ENCODE measurements at regions of chr5 and their contacts with region 1.

Region 1: DNA sequence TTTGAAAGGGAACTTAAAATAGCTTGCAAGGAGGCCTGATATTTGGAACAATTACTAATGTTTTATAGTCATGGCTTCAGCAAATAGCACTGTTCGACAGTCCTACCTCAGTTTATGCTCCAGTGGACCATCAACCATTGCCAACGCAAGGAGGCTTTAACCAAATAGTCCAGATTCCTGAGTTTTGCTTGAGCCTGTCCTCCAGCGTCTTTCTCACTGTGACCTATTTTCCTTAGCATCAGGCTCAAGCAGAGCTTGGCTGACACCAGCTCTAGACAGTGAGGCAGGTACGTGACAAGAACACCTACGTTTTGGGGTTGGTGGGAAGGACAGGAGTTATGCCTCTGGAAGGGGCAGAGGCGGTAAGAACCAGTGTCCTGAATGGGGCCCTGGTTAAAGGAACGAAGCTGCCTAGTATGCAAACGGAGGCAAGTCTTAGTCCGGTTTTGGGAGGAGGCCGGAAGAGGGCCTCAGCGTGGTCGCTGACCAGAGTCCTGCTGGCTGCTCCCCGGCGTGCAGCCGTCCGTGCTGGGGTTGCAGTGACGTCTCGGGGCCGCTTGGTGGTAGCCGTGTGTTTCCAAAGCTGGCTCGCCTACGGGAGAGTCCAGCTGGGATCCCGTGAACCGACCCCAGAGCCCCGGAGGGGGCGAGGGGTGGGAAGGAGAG is 998 bp upstream of the FGF18 start:
- DNase-seq: peak; percentile 70 to 87
- H3K4me3 ChIP-seq: peak overlapping the region; percentile 64; the same call in 1 of the 2 replicates
- H3K27ac ChIP-seq: no peak overlapping the region
- H3K4me1 ChIP-seq: 0 out of 2 replicates have a peak, but pooled peaks cover 7% of the 10 kb centered on the region
- H3K27me3 ChIP-seq: no peaks in the 10 kb centered on the region
- CTCF ChIP-seq: peak; percentile 93

Region 2: GRCh38 chr5:171405601-171406005 is 12.8 kb before region 1 on chr5:
- CTCF ChIA-PET with region 1: no interaction called
- POLR2A ChIA-PET with region 1: interaction called, 11 read pairs
- intact Hi-C with region 1: no loop called
- DNase-seq: no peak
- H3K4me3 ChIP-seq: no peak overlapping the region
- H3K27ac ChIP-seq: peak overlapping the region; percentile 16; the same call in 1 of the 2 replicates
- H3K4me1 ChIP-seq: peaks cover 22% of the 10 kb centered on the region; the same call in 1 of the 2 replicates
- H3K27me3 ChIP-seq: no peaks in the 10 kb centered on the region
- CTCF ChIP-seq: peak; percentile 50; the same call in 1 of the 2 replicates

Region 3: GRCh38 chr5:171521219-171521633 is 102.8 kb after region 1 on chr5:
- CTCF ChIA-PET with region 1: interaction called, 6 read pairs
- POLR2A ChIA-PET with region 1: no interaction called
- intact Hi-C with region 1: loop called (anchors 1 kb)
- DNase-seq: peak; percentile 82 to 96
- H3K4me3 ChIP-seq: peak overlapping the region; percentile 47; the same call in 1 of the 2 replicates
- H3K27ac ChIP-seq: peak overlapping the region; percentile 98
- H3K4me1 ChIP-seq: peaks cover 48% of the 10 kb centered on the region
- H3K27me3 ChIP-seq: no peaks in the 10 kb centered on the region
- CTCF ChIP-seq: peak; percentile 46; the same call in 1 of the 2 replicates

Region 4: DNA sequence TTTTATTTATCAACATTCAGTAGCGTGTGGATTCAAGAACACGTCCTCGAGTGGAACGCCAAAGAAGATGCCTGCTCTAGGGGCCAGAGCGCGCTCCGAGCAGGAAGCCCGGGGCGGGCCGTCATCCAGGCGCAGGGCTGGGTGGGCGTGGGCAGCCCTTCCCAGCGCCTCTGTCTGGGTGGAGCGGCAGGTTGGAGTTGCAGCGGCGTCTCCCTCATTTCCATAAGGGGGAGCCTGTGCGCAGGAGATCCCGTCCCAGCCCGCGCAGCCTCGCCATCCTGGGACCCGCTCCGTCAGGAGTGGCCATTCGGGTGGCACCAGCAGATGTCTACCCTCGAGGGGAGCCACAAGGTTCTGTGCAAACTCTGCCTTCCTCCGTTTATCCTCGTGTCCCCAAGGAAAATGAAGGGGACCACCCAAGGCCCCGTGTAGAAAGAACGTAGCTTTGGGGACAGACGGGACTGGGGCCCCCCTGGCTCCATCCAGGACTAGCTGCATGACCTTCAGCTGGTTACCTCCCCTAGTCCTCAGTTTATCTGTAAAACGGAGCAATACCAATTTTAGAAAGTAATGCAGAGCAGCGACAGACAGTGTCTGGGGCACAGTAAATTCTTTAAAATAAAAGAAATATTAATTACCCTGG is 211.7 kb after region 1 on chr5:
- CTCF ChIA-PET with region 1: no interaction called
- POLR2A ChIA-PET with region 1: no interaction called
- intact Hi-C with region 1: loop called (anchors 5 kb)
- DNase-seq: peak in 1 of 2 experiments; percentile 60
- H3K4me3 ChIP-seq: peak overlapping the region; percentile 30; the same call in 1 of the 2 replicates
- H3K27ac ChIP-seq: no peak overlapping the region
- H3K4me1 ChIP-seq: peaks cover 26% of the 10 kb centered on the region
- H3K27me3 ChIP-seq: no peaks in the 10 kb centered on the region
- CTCF ChIP-seq: peak; percentile 55

Region 5: GRCh38 chr5:171907725-171908343 is 489.4 kb after region 1 on chr5:
- CTCF ChIA-PET with region 1: no interaction called
- POLR2A ChIA-PET with region 1: no interaction called
- intact Hi-C with region 1: loop called (anchors 1 kb)
- DNase-seq: peak; percentile 37 to 56
- H3K4me3 ChIP-seq: no peak overlapping the region
- H3K27ac ChIP-seq: no peak overlapping the region
- H3K4me1 ChIP-seq: no peaks in the 10 kb centered on the region
- H3K27me3 ChIP-seq: no peaks in the 10 kb centered on the region
- CTCF ChIP-seq: peak; percentile 87

Region 6: DNA sequence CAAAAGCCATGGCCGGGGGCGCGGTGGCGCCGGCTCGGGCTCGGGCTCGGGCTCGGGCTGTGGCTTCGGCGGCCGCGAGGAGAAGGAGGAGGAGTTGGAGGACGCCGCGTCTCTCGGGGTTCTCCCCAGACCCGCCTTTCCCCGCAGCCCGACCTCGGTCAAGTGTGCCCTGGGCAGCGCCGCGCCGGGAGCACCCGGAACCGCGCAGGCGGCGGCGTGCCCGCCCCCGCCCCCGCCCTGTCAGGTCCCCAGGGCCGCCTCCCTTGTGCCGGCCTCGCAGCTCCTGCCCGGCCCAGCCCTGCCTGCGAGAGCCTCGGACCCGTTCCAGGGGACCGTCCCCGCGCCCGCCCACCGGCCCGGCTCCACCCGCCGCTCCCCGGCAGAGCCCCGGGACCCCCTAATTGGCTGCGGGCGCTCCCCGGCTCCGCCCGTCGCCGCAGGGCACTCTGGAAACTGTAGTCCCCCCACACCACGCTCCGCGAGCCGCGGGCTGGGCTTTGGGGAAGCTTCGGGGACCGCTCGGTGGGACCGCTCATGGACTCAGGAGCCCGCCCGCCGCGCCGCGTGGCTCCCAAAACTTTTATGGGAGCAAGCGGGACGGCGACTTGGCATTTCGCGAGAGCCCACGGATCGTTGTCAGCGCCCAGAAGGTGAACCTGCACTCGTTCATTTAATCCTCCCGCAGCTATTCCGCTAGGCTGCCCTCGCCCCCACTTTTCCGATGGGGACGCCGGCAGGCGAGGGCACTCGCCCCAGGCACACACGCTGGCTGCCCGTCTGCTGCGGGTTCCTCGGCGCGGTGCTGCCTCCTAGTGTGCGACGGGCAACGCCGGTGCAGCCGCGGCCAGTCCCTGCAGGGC is 769.8 kb after region 1 on chr5 and contains the start of gene STK10:
- CTCF ChIA-PET with region 1: no interaction called
- POLR2A ChIA-PET with region 1: no interaction called
- intact Hi-C with region 1: loop called (anchors 2 kb)
- DNase-seq: peak; percentile 71 to 93
- H3K4me3 ChIP-seq: peak within 1 kb of the TSS; percentile 67
- H3K27ac ChIP-seq: peak within 1 kb of the TSS; percentile 65
- H3K4me1 ChIP-seq: peaks cover 21% of the 10 kb centered on the region
- H3K27me3 ChIP-seq: no peaks in the 10 kb centered on the region
- CTCF ChIP-seq: peak; percentile 81
- total RNA-seq, gene STK10: 23.3 and 31.5 TPM in 2 replicates

Region 7: DNA sequence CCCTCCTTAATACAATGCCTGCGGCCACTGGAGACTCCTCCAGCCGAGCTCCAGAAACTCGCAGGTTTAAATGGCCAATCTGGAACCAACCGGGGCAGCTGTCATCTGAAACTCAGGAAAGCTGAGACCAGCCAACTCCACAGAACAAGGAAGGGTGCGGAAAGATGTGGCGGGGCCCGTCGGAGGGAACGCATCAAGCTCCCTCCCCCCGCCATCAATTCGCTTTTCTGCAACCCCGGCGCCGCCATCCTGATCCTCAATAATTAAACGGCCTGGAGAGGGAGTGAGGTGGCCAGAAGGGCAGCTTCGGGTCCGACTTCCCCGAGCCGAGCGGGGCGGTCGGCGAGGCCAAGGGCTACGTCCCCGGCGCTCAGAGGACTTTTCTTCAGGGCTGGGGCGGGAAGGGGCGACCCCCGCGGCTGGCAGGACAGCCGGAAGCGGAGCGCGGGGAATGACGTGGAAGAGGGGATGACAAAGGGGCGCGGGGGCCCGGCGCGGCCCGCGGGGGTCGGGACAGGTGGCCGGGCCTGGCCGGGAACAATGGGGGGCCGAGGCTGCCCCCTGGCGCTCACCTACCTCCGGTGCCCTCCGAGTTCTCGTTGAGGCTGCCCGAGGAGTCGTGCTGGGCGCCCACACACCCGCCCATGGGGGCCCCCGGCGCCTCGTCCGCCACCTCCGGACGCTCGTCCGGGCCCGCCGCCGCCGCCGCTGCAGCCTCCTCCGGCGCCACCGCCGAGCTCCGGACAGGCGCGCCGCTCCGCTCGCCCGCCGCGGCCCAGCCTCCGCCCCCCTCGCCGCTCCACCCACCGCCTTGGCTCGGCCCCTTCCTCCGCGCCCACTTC is 864.8 kb after region 1 on chr5 and contains the start of gene UBTD2:
- CTCF ChIA-PET with region 1: no interaction called
- POLR2A ChIA-PET with region 1: no interaction called
- intact Hi-C with region 1: loop called (anchors 10 kb)
- DNase-seq: peak; percentile 59 to 91
- H3K4me3 ChIP-seq: peak within 1 kb of the TSS; percentile 98
- H3K27ac ChIP-seq: peak within 1 kb of the TSS; percentile 46
- H3K4me1 ChIP-seq: peaks cover 25% of the 10 kb centered on the region
- H3K27me3 ChIP-seq: no peaks in the 10 kb centered on the region
- CTCF ChIP-seq: peak; percentile 62
- total RNA-seq, gene UBTD2: 16.4 and 21.7 TPM in 2 replicates